HCT116 (cell line): ENCODE measurements at regions of chr20 and their contacts with region 1.

Region 1: DNA sequence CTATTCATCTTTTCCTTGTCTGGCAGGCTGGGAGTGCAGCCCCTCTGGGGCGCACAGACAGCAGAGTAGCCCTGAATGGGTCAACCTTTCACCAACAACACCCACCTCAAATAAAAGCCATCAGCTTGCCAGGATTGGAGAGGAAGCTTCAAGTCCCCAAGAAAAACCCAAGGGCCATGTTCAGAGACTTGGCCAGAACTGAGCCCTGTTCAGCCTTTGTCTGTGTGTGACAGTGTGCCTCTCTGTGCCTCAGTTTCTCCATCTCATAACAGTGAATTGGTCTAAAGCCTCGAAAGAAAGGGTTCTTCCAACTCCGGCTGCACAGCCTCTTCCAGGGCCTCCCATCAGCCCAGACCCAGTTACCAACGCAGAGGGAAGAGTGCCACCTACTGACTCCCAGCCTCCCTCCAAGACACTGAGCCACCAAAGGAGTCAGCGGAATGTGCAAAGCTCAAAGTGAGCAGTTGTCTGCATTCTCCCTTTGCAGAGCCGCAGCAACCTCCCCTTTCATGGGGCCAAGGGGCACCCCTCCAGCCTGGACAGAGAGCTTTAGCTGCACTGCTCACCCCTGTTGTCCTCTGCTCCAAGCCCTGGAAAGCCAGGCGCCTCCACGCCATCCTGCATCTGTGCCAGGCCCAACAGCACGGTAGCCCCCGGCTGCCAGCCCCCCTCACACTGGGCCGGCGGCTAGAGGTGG is 82.7 kb upstream of the TOP1 start:
- DNase-seq: peak; percentile 19
- ATAC-seq: peak; percentile 96
- H3K4me3 ChIP-seq: no peak overlapping the region
- H3K27ac ChIP-seq: no peak overlapping the region
- H3K4me1 ChIP-seq: peaks cover 0 to 24% of the 10 kb centered on the region in 2 experiments; a peak in 2 of 4 replicates
- H3K27me3 ChIP-seq: no peaks in the 10 kb centered on the region
- CTCF ChIP-seq: peak; percentile 68 to 75 (median 75); a peak in 5 of 6 replicates
- POLR2A ChIP-seq: no peak
- RAD21 ChIP-seq: peak; percentile 83

Region 2: DNA sequence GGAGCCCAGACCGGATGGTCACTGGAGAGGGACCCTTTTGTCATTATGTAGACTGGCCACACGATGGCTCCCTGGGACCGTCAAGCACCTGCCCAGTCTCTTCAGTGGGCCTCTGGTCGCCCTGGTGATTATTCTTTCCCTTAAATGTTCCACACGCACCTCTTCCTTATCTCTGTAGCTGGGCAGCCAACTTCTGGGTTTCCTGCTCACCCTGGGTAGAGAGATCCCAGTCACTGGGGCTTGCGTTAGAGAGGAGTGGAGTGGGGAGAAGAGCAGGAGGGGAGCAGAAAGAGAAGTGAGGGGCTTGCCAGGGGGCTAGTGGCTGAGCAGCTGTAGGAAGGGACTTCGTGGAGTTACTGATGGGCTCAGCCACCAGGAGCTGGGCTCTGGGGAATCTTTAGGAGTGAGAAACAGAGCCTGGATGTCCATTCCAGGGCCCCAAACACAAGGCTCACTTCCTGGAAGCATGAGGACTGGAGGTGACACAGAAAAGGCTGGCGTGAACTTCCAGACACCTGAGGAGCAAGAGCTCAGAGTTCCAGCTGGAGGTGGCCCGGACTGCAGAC is 1833.6 kb before region 1 on chr20:
- CTCF ChIA-PET with region 1: no interaction called
- POLR2A ChIA-PET with region 1: no interaction called
- RAD21 ChIA-PET with region 1: no interaction called
- intact Hi-C with region 1: loop called (anchors 5 kb)
- DNase-seq: peak; percentile 50
- ATAC-seq: peak; percentile 76
- H3K4me3 ChIP-seq: no peak overlapping the region
- H3K27ac ChIP-seq: no peak overlapping the region
- H3K4me1 ChIP-seq: peaks cover 30 to 53% of the 10 kb centered on the region in 2 experiments
- H3K27me3 ChIP-seq: peaks cover 6% of the 10 kb centered on the region; the same call in 1 of the 2 replicates
- CTCF ChIP-seq: peak; percentile 57 to 81 (median 70)
- POLR2A ChIP-seq: no peak
- RAD21 ChIP-seq: peak; percentile 90

Region 3: DNA sequence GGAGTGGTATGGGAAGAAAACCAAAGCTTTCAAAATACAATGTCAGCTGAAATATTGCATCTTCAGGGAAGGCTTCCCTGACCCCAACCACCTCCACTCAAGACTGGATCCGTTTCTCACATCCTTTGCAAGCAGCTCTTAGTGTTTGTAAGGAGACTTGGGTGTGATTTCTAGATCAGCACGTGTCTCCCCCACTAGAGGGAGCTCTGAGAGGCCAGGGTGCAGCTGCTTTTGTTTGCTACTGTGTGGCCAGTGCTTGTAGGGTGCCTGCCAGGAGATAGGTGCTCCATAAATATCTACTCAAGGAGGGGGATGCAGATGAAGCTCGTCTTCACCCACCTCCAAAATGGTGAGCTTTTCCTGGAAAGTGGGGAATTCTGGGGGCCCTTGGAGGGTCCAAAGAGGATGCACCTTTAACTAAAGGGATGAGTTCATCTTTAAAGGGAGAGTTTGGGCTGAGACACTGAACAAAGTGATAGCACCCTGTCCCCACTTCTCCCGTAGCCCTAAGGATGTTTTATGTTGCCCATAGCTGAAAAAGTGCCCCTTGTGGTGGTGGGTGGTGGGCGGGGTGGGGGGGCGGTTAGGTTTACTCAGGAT is 204.3 kb before region 1 on chr20:
- CTCF ChIA-PET with region 1: interaction called, 23 read pairs
- POLR2A ChIA-PET with region 1: no interaction called
- RAD21 ChIA-PET with region 1: interaction called, 8 to 9 read pairs
- intact Hi-C with region 1: loop called (anchors 2 kb)
- DNase-seq: peak; percentile 56
- ATAC-seq: peak; percentile 94
- H3K4me3 ChIP-seq: no peak overlapping the region
- H3K27ac ChIP-seq: no peak overlapping the region
- H3K4me1 ChIP-seq: no peaks in the 10 kb centered on the region
- H3K27me3 ChIP-seq: peaks cover 38% of the 10 kb centered on the region
- CTCF ChIP-seq: peak; percentile 61 to 92 (median 90)
- POLR2A ChIP-seq: no peak
- RAD21 ChIP-seq: peak; percentile 65

Region 4: GRCh38 chr20:40797425-40797824 is 148.5 kb before region 1 on chr20:
- CTCF ChIA-PET with region 1: interaction called, 6 read pairs
- POLR2A ChIA-PET with region 1: no interaction called
- RAD21 ChIA-PET with region 1: interaction called, 3 to 7 read pairs
- intact Hi-C with region 1: loop called (anchors 5 kb)
- DNase-seq: peak; percentile 23
- ATAC-seq: peak; percentile 91
- H3K4me3 ChIP-seq: no peak overlapping the region
- H3K27ac ChIP-seq: no peak overlapping the region
- H3K4me1 ChIP-seq: no peaks in the 10 kb centered on the region
- H3K27me3 ChIP-seq: peaks cover 29% of the 10 kb centered on the region
- CTCF ChIP-seq: peak; percentile 63 to 76 (median 68); a peak in 5 of 6 replicates
- POLR2A ChIP-seq: no peak
- RAD21 ChIP-seq: peak; percentile 72

Region 5: DNA sequence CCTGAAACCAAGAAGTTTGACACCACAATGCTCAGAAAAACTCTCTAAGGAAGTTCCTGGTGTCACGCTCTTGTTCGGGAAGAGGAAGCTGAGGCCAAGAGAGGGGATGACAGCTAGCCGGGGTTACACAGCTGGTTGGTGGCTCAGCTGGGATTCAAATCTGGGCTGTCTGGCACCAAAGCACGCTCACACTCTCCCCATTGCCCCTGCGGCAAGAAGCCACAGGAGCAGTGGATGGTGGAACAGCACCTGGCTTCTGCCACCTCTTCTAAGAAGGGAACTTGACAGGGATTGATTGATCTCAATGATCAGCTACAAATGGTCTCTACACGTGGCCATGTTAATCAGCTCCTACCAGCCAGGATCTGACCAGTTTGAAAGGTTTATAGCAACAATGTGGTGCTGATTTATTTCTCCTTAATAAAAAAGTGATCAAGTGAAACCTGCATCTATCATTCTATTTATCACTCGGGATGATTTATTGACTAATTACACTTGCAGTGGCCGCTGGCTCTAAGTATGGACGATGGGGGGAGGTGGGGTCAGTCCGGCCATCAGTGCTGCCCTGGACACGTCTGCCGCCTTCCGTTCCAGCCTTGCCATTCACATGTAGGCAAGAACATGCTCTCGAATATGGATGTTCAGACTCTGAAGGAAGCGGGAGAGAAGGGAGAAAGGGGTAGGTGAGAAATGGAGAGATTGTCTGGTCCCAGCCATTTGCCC is 10.8 kb after region 1 on chr20:
- CTCF ChIA-PET with region 1: no interaction called
- POLR2A ChIA-PET with region 1: no interaction called
- RAD21 ChIA-PET with region 1: no interaction called
- intact Hi-C with region 1: no loop called
- DNase-seq: no peak
- ATAC-seq: no peak
- H3K4me3 ChIP-seq: no peak overlapping the region
- H3K27ac ChIP-seq: no peak overlapping the region
- H3K4me1 ChIP-seq: no peaks in the 10 kb centered on the region
- H3K27me3 ChIP-seq: no peaks in the 10 kb centered on the region
- CTCF ChIP-seq: no peak
- POLR2A ChIP-seq: no peak
- RAD21 ChIP-seq: no peak